ENCODE measurements at regions of chr16 and their contacts with region 1.

Region 1: DNA sequence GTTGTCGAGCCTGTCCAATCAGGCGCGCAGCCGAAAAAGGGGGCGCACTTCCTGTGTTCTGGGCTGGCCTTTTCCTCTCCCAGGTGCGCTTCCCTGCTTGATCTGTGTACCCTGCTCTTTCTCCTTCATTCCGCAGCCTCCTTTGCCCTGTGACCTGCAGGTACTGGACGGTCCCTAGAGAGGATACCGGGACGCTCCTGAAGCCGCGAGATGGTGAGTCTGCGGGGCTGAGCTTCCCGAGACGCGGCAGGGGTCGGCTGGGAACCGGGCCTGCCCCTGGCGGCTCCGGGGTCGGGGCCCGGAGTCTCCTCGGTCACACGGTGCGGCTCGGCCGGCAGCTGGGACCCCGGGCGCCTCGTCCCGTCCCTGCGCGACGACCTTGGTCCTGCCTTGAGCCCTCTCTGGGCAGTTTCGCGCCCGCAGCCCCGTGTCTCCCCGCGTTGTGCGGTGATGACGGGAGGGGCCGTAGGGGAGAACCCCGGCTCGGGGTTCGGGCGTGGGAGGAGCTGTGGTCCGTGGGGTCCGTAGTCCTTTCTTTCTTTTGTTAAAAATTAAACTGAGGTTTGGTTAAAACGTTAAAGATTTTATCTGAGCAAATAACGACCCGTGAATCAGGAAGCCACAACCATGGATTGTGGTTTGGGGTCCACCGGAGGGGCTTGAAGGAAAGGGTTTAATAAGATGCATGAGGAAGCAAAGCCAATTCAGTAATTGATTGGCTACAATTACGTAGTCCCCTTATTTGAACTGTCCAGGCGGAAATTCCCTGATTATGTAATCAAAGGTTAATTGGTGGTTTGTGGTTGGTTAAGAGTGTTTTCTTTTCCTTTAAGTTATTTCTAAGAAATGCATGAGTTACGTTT is 172.8 kb upstream of the ZNF267 start:
- DNase-seq: peak; percentile 86
- H3K4me3 ChIP-seq: peak overlapping the region; percentile 83 to 95 (median 93)
- H3K27ac ChIP-seq: peak overlapping the region; percentile 88
- H3K4me1 ChIP-seq: peaks cover 8% of the 10 kb centered on the region
- H3K27me3 ChIP-seq: no peaks in the 10 kb centered on the region
- CTCF ChIP-seq: no peak

Region 2: DNA sequence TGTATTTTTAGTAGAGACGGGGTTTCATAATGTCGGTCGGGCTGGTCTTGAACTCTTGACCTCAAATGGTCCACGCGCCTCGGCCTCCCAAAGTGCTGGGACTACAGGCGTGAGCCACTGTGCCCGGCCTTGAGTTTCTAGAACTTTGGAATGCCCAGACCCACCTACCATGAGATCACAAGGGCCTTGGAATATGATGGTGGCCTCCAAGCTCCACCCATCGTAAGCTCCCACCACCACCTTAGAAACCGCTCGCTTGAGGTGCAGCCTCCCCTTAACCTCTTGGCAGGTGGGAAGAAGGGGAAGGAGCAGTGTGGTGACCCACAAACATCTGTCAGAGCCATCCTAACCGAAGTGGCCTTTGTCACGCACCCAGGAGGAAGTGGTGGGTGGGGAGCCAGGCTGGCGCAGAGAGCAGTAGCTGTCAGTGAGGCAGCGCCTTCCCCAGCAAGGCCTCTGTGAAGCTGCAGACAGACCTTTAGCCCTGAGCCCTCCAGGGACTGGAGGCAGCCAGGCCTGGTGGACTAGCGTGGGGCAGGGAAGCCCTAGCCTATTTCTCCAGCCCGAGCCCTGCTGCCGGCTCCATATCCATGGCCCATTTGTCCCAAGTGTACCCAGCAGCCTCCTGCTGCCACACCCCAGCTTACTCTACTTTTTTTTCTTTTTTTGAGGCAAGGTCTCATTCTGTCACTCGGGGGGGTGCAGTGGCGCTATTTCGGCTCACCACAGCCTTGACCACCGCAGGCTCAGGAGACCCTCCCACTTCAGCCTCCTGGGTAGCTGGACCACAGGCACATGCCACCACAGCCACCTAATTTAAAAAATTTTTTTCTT is 1242.0 kb before region 1 on chr16:
- CTCF ChIA-PET with region 1: no interaction called
- dilution Hi-C with region 1: no loop called
- in situ Hi-C with region 1: no loop called
- intact Hi-C with region 1: no loop called
- DNase-seq: no peak
- H3K4me3 ChIP-seq: no peak overlapping the region
- H3K27ac ChIP-seq: no peak overlapping the region
- H3K4me1 ChIP-seq: no peaks in the 10 kb centered on the region
- H3K27me3 ChIP-seq: no peaks in the 10 kb centered on the region
- CTCF ChIP-seq: no peak

Region 3: DNA sequence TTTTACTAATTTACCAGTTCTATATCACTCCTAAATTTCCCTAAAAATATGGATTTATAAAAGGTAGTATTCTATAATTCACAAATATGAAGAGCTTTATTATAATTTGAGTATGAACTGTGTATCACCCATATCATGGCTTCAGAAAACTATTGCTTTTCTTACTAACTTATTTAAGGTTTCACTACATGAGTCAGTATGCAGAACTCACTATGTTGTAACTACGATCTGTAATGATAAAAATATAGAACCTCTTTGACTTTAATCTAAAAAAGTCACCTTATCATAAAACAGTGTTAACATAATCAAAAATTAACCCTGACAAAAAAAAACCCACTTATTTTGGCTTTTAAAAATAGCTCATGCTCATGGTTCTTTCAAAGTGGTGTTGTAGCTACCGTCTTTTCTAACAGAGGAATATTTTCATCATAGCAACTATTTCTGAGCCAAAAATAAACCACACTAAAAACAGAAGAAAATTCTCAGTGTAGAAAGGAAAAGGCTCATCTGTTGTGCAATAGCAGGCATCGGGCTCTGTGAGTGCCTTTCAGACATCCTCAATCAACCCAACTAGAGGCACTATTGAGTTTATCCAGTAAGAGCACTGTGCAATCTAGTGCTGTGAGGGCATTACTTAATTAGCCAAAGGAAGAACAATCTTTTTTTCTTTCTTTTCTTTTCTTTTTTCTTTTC is 398.9 kb before region 1 on chr16:
- CTCF ChIA-PET with region 1: no interaction called
- dilution Hi-C with region 1: no loop called
- in situ Hi-C with region 1: no loop called
- intact Hi-C with region 1: loop called (anchors 10 kb)
- DNase-seq: peak; percentile 26
- H3K4me3 ChIP-seq: no peak overlapping the region
- H3K27ac ChIP-seq: no peak overlapping the region
- H3K4me1 ChIP-seq: no peaks in the 10 kb centered on the region
- H3K27me3 ChIP-seq: no peaks in the 10 kb centered on the region
- CTCF ChIP-seq: peak in 1 of 2 donors; percentile 5

Region 4: GRCh38 chr16:31451681-31452351 is 248.9 kb before region 1 on chr16:
- CTCF ChIA-PET with region 1: no interaction called
- dilution Hi-C with region 1: loop called (anchors 5 kb)
- in situ Hi-C with region 1: loop called in 1 of 2 experiments (anchors 5 kb)
- intact Hi-C with region 1: loop called (anchors 2 kb)
- DNase-seq: peak; percentile 69
- H3K4me3 ChIP-seq: no peak overlapping the region
- H3K27ac ChIP-seq: peak overlapping the region; percentile 75
- H3K4me1 ChIP-seq: peaks cover 40% of the 10 kb centered on the region
- H3K27me3 ChIP-seq: no peaks in the 10 kb centered on the region
- CTCF ChIP-seq: peak; percentile 72 to 90

Region 5: GRCh38 chr16:31487720-31488467 is 212.9 kb before region 1 on chr16:
- CTCF ChIA-PET with region 1: no interaction called
- dilution Hi-C with region 1: no loop called
- in situ Hi-C with region 1: no loop called
- intact Hi-C with region 1: loop called (anchors 1 kb)
- DNase-seq: peak; percentile 66
- H3K4me3 ChIP-seq: peak overlapping the region; percentile 56 to 64 (median 61)
- H3K27ac ChIP-seq: no peak overlapping the region
- H3K4me1 ChIP-seq: peaks cover 23% of the 10 kb centered on the region
- H3K27me3 ChIP-seq: no peaks in the 10 kb centered on the region
- CTCF ChIP-seq: no peak

Region 6: GRCh38 chr16:31713071-31713944 is 12.6 kb after region 1 on chr16:
- CTCF ChIA-PET with region 1: no interaction called
- dilution Hi-C with region 1: no loop called
- in situ Hi-C with region 1: no loop called
- intact Hi-C with region 1: loop called (anchors 1 kb)
- DNase-seq: peak; percentile 90
- H3K4me3 ChIP-seq: peak overlapping the region; percentile 90 to 98 (median 94)
- H3K27ac ChIP-seq: peak overlapping the region; percentile 89
- H3K4me1 ChIP-seq: peaks cover 15% of the 10 kb centered on the region
- H3K27me3 ChIP-seq: no peaks in the 10 kb centered on the region
- CTCF ChIP-seq: no peak

Measured in mammary epithelial cell (primary cell).